Activated T-helper 1 cell treated with anti-CD3 and anti-CD28 coated beads, Interleukin-12 subunit alpha, Interleukin-12 subunit beta, Interleukin-2, Interleukin-4 antibody, amounts not matched to agents 30 ng/mL and 10 ng/mL and 1 ng/mL, durations not matched to agents 14 hours and 24 hours and 36 hours (primary cell): ENCODE measurements at regions of chr2 and their contacts with region 1.

Region 1: DNA sequence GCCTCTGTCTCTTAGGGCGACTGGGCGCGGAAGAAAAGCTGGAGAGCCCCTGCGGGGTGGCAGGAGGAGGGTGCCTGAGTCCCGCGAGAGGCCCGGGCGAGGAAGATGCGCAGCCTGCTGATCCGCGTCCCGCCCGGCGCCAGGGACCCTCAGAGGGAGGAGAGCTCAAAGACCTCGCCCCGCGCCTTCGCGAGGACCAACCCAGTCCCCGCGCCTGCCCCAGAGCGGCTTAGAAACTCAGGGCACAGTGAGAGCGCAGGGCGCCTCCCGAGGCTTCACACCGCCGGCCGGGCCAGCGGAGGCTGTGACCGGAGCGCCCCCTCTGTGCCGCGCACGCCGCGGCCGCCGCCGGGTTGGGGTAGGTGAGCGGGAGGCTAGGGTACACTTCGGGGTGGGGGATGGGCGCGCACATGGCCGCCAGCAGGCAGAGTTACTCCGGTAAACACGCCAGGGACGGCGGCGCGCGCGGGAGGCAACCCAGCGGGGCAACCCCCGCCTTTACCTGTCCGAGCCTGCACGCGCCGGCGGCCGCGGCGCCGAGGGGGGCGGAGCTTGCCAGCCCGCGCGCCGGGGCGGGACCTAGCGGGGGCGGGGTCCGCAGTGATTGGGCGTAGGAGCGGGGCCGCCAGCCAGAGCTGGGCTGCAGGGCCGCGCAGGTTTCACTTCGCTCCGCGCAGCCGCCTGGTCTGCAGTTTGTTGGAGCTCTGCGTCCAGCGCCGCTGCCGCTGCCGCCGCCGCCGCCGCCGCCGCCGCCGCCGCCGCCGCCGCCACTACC is at the start of gene BCL2L11:
- DNase-seq: peak; percentile 93
- H3K4me3 Mint-ChIP-seq: peak within 1 kb of the TSS; percentile 97
- H3K27ac Mint-ChIP-seq: peak within 1 kb of the TSS; percentile 97
- H3K4me1 Mint-ChIP-seq: peaks cover 51% of the 10 kb centered on the region
- H3K27me3 Mint-ChIP-seq: peaks cover 4% of the 10 kb centered on the region
- total RNA-seq, gene BCL2L11: 335 and 347 TPM in 2 replicates

Region 2: DNA sequence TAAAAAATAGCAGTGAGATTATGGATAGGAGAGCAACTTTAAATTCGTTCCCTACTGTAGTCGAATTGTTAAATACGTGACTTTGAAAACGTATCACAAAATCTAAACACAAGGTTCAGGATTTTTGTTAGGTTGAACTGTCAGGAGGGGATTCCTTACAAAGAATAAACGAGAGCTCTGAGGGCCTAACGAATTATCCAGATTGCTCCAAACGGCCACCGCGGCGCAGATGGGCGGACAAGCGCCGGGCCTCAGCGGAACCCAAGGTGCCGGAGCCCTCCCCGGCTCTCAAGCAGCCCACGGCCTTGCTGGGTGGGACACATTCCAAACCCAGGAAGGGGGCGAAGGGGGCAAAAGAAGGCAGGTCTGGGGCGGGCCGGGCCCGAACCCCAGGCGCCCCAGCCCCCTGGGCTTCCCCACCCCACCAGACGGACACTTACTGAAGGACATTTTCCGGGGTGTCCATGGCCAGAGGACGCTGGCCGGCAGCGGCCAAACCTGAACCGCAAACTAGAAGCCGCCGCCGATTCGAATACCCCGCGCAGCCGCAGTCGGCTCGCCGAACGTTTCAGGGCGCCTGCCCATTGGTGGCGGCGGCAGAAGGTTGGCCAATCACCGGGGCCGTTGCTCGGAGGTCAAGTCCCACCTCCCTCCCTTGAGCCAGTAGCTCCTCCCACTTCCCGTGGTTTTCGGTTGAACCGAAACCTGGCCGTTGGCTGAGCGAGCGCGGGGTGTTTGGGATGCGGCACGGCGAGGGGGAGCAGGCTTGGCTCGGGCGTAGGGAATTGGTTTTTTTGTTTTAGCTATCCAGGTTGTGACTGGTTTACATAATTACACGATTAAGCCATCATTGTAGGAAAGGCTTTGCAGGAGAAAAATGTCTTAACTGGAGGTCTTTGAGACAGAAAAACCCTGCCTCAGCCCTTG is 442.6 kb before region 1 on chr2 and contains the start of gene BUB1:
- intact Hi-C with region 1: loop called (anchors 5 kb)
- DNase-seq: peak; percentile 96
- H3K4me3 Mint-ChIP-seq: peak within 1 kb of the TSS; percentile 84
- H3K27ac Mint-ChIP-seq: peak within 1 kb of the TSS; percentile 88
- H3K4me1 Mint-ChIP-seq: peaks cover 57% of the 10 kb centered on the region
- H3K27me3 Mint-ChIP-seq: peaks cover 5% of the 10 kb centered on the region
- total RNA-seq, gene BUB1: 56.1 and 61.9 TPM in 2 replicates

Region 3: GRCh38 chr2:110847651-110848050 is 272.8 kb before region 1 on chr2:
- intact Hi-C with region 1: loop called (anchors 1 kb)
- DNase-seq: no peak
- H3K4me3 Mint-ChIP-seq: no peak overlapping the region
- H3K27ac Mint-ChIP-seq: peak overlapping the region; percentile 96
- H3K4me1 Mint-ChIP-seq: peaks cover 88% of the 10 kb centered on the region
- H3K27me3 Mint-ChIP-seq: peaks cover 6% of the 10 kb centered on the region

Region 4: GRCh38 chr2:110881908-110882307 is 238.5 kb before region 1 on chr2:
- intact Hi-C with region 1: no loop called
- DNase-seq: no peak
- H3K4me3 Mint-ChIP-seq: no peak overlapping the region
- H3K27ac Mint-ChIP-seq: peak overlapping the region; percentile 19
- H3K4me1 Mint-ChIP-seq: peaks cover 22% of the 10 kb centered on the region
- H3K27me3 Mint-ChIP-seq: peaks cover 45% of the 10 kb centered on the region

Region 5: DNA sequence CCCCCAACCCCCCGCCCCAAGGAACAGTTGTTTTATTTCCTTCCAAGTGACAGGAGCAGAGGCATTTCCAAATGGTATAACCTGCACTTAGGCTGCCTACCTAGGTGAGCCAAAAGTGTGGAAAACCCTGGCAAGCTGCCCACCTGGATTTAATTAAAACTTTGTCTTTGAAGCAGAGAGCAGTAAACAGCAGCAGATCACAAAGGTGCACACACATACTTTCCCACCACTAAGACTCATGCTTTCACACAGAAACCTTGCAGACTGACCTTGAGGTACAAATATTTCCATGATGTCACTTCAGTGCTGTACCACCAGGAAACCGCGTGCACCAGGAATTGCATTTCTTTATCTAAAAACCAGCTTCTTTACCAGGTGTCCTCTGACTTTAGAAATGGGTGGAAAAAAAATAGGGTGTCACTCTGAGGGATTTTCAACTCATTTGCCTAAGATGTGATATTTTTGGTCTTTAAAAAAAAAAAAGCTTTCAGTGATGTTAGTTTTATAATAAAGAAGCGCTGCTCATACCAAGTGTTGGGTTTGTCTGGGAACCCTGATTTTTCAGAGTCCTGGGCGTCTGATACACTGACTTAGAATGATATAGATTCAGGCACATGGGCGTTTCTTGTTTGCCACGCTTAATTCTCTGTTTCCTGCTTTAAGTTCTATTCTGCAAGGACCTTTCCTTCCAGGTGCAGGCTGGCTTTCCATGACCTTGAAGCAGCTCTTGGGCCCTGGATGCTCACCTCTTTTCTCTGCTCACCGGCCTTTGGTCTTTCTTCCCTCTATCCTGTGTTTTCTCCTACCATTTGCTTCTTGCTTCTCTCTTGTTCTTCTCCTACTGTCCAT is 70.4 kb before region 1 on chr2:
- intact Hi-C with region 1: loop called (anchors 1 kb)
- DNase-seq: no peak
- H3K4me3 Mint-ChIP-seq: peak overlapping the region; percentile 24
- H3K27ac Mint-ChIP-seq: peak overlapping the region; percentile 82
- H3K4me1 Mint-ChIP-seq: peaks cover 48% of the 10 kb centered on the region
- H3K27me3 Mint-ChIP-seq: peaks cover 9% of the 10 kb centered on the region

Region 6: DNA sequence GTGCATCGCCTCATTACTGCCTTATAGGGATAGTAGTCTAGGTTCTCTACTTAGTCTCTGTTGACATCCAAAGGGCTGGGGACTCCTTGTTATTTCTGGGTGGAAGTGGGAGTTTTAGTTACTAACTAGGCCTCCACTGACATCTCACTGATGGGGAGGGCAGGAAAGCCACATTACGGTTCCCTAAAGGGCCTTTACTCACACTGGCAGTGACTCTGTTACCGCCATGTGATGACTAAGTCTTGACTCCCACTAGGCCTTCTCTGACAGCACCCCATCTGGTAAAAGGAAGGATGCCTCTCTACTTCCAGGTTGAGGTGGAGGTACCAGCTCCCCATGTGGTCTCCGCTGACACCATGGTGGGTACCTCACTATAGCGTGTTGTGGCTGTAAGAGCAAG is 13.7 kb before region 1 on chr2:
- intact Hi-C with region 1: no loop called
- DNase-seq: no peak
- H3K4me3 Mint-ChIP-seq: no peak overlapping the region
- H3K27ac Mint-ChIP-seq: no peak overlapping the region
- H3K4me1 Mint-ChIP-seq: peaks cover 15% of the 10 kb centered on the region
- H3K27me3 Mint-ChIP-seq: peaks cover 52% of the 10 kb centered on the region

Region 7: GRCh38 chr2:111135910-111136297 is 15.5 kb after region 1 on chr2:
- intact Hi-C with region 1: loop called (anchors 1 kb)
- DNase-seq: no peak
- H3K4me3 Mint-ChIP-seq: no peak overlapping the region
- H3K27ac Mint-ChIP-seq: no peak overlapping the region
- H3K4me1 Mint-ChIP-seq: peaks cover 79% of the 10 kb centered on the region
- H3K27me3 Mint-ChIP-seq: no peaks in the 10 kb centered on the region

Region 8: GRCh38 chr2:111209045-111209514 is 88.6 kb after region 1 on chr2:
- intact Hi-C with region 1: loop called (anchors 1 kb)
- DNase-seq: peak; percentile 62
- H3K4me3 Mint-ChIP-seq: peak overlapping the region; percentile 39
- H3K27ac Mint-ChIP-seq: peak overlapping the region; percentile 73
- H3K4me1 Mint-ChIP-seq: peaks cover 42% of the 10 kb centered on the region
- H3K27me3 Mint-ChIP-seq: peaks cover 8% of the 10 kb centered on the region